Sciatic nerve (tissue), 2 donors: ENCODE measurements at regions of chr3 and their contacts with region 1.

Region 1: DNA sequence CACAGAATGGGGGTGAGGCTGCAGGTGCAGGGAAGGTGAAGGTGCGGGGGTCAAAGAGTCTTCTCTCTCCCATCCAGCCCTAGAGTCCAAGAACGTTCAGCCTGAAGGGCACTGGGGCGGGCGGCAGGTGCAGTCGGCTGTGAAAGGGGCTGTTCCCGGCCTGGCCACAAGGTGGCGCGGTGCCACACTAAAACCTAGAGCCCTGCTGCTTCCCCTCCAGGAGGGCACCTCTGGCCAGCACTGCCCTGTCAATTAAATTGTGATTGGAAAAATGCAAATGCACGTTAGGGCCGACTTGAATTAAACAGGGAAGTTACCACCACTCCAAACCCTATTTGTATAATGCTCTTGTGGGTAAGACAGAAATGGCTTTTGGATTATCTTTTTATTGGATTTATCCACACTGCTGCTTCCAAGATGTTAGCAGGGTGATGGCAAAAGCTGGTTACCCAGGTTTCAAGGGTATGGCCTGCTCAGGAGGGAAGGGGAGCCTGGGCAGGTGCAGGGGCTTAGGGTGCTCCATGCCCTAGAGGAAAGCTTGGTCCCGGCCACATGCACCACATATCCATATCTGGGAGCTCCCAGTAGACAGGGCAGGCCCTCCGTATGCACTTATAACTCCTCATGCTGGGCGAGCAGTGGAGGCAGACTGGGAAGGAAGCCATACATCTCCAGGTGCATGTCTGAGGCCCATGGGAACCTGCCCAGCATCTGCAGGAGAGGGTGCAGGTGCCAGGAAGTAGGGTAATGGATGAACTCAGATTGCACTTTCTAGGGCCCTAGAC is 119.8 kb downstream of the ADCY5 start:
- DNase-seq: peak; percentile 88
- ATAC-seq: peak; percentile 83

Region 2: DNA sequence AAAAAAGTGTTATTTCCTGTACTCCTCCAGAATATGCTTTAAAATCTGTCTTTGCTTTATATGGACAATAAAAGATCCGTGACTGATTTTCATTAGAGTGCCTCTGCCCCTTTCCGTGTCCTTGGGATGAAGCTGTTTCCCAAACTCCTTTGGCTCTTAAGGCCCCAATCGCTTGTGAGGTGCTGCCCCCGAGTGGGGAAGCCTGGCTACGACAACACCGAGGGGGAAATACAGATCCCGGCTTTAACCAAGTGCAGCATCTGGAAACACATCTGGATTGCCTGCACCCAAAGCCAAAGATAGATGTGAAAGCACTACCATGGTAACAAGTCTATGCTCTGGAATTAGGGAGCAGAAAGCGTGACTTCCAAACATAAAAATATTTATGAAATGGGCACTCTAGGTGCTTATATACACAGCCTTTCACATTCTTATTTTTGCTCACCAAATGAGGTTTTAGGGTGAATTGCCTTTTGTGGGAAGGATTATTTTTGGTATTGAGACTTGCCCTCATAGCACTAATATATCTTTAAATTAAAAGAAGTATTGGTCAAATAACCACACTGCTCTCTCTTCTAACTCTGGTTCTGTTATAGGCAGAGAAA is 160.5 kb after region 1 on chr3:
- intact Hi-C with region 1: loop called (anchors 10 kb)
- DNase-seq: peak; percentile 84
- ATAC-seq: peak; percentile 89

Region 3: GRCh38 chr3:123559040-123559861 is 230.2 kb after region 1 on chr3:
- intact Hi-C with region 1: loop called (anchors 5 kb)
- DNase-seq: no peak
- ATAC-seq: peak; percentile 42